HCT116 (cell line): ENCODE measurements at regions of chr19 and their contacts with region 1.

Region 1: DNA sequence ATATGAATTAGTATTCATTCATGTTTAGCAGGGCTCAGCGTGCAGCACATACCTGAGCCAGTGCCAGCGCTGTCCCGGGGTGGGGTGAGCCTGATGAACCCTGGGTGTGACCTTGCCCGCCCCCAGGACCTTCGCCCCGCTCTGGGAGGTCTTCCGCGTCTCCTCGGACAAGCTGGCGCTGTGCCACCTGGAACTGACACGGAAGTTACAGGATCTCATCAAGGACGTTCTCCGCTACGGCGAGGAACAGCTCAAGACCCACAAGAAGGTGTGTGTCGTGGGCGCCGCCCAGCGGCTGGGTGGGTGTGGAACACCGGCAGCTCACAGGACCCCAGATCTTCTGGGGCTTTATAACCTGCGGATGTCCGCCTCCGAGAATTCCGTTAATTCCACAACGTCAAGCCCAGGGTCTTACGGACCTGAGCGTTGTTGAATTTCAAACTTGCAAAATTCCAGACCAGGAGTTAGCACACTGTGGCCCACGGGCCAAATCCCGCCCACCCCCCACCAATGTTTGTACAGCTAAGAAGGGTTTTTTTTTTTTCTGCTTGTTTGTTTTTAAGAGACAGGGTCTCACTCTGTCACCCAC is 15.4 kb downstream of the FCHO1 start:
- DNase-seq: peak; percentile 88
- ATAC-seq: peak; percentile 91
- H3K4me3 ChIP-seq: peak overlapping the region; percentile 42 to 50
- H3K27ac ChIP-seq: peak overlapping the region; percentile 39; the same call in 1 of the 2 replicates
- H3K4me1 ChIP-seq: peaks cover 20 to 32% of the 10 kb centered on the region in 2 experiments
- H3K27me3 ChIP-seq: no peaks in the 10 kb centered on the region
- CTCF ChIP-seq: peak; percentile 81 to 94 (median 93)
- POLR2A ChIP-seq: no peak
- RAD21 ChIP-seq: peak; percentile 98

Region 2: DNA sequence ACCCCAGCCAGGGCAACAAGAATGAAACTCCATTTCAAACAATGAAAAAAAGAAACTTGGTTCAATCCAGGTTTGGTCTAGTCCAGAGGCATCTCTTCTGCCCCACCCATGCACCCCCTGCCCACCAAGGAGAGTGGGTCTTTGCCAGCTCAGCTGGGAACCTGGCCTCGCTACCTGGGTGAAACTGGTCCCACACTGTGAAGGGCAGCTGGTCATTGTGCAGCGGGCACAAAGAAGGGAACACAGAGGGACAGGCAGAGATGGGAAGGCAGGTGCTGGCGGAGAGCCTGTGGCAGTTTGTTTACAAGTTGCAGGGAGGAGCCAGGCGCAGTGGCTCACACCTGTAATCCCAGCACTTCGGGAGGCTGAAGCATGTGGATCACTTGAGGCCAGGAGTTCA is 790.2 kb before region 1 on chr19:
- CTCF ChIA-PET with region 1: no interaction called
- POLR2A ChIA-PET with region 1: no interaction called
- RAD21 ChIA-PET with region 1: no interaction called
- intact Hi-C with region 1: no loop called
- DNase-seq: no peak
- ATAC-seq: no peak
- H3K4me3 ChIP-seq: no peak overlapping the region
- H3K27ac ChIP-seq: no peak overlapping the region
- H3K4me1 ChIP-seq: no peaks in the 10 kb centered on the region
- H3K27me3 ChIP-seq: peaks cover 10% of the 10 kb centered on the region
- CTCF ChIP-seq: no peak
- POLR2A ChIP-seq: no peak
- RAD21 ChIP-seq: no peak

Region 3: GRCh38 chr19:17496337-17496997 is 270.2 kb before region 1 on chr19:
- CTCF ChIA-PET with region 1: interaction called, 6 read pairs
- POLR2A ChIA-PET with region 1: interaction called, 3 read pairs
- RAD21 ChIA-PET with region 1: no interaction called
- intact Hi-C with region 1: loop called (anchors 5 kb)
- DNase-seq: peak; percentile 71
- ATAC-seq: peak; percentile 96
- H3K4me3 ChIP-seq: no peak overlapping the region
- H3K27ac ChIP-seq: no peak overlapping the region; the same call in 1 of the 2 replicates
- H3K4me1 ChIP-seq: peaks cover 11 to 31% of the 10 kb centered on the region in 2 experiments
- H3K27me3 ChIP-seq: no peaks in the 10 kb centered on the region
- CTCF ChIP-seq: peak; percentile 99 to 100 (median 99)
- POLR2A ChIP-seq: no peak
- RAD21 ChIP-seq: peak; percentile 81

Region 4: DNA sequence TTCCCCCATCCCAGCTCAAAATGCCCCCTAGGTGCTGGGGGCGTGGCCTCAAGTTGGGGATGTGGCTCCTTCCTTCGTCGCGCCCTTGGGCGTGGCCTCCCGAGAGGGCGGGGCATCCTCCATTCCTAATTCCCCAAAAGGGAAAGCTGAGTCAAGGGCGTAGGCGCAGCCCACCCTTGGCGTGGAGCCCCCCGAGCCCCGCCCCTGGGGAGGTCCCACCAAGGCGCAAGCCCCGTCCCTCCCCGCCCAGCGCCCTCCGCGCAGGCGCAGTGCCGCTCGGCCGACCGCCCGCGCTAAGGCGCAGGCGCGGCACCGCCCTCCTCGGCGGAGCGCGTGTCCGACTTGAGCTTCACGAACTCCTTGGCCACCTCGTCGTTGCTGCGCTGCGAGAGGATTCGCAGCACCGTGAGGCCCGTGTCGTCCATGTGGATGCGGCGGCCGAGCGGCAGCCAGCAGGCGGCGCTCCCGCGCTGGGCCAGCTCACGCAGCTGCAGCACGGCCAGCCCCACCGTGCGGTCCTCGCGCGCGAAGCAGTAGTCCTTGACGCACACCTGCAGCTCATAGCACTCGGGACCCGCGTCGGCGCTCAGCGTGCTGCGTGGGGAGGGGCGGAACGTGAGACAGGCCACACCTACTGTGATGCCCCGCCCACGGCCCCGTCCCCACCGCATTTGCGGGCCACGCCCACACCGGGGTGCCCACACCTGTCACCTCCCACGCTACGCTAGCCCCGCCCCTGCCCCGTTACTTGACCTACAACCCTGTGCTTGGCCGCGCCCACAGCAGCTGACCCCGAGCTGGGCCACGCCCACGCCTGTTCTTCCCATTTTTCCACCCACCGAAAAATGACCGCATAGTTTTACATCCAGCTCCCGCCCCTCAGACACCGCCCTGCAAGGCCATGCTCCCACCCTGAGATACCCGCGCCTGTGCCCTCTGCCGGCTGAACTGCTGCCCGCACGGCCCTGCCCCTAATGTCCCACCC is 160.6 kb before region 1 on chr19:
- CTCF ChIA-PET with region 1: interaction called, 30 read pairs
- POLR2A ChIA-PET with region 1: interaction called, 3 read pairs
- RAD21 ChIA-PET with region 1: interaction called, 3 to 6 read pairs
- intact Hi-C with region 1: no loop called
- DNase-seq: peak; percentile 92
- ATAC-seq: peak; percentile 94
- H3K4me3 ChIP-seq: peak overlapping the region; percentile 7 to 37; a peak in 2 of 4 replicates
- H3K27ac ChIP-seq: peak overlapping the region; percentile 87
- H3K4me1 ChIP-seq: peaks cover 8 to 19% of the 10 kb centered on the region in 2 experiments
- H3K27me3 ChIP-seq: no peaks in the 10 kb centered on the region
- CTCF ChIP-seq: peak; percentile 68 to 94 (median 88)
- POLR2A ChIP-seq: peak; percentile 86
- RAD21 ChIP-seq: peak; percentile 75

Region 5: GRCh38 chr19:17747205-17748098 is 19.2 kb before region 1 on chr19:
- CTCF ChIA-PET with region 1: interaction called, 11 read pairs
- POLR2A ChIA-PET with region 1: no interaction called
- RAD21 ChIA-PET with region 1: interaction called in 1 of 2 experiments, 3 read pairs
- intact Hi-C with region 1: no loop called
- DNase-seq: peak; percentile 93
- ATAC-seq: peak; percentile 99
- H3K4me3 ChIP-seq: peak overlapping the region; percentile 54 to 61
- H3K27ac ChIP-seq: no peak overlapping the region; the same call in 1 of the 2 replicates
- H3K4me1 ChIP-seq: peaks cover 3 to 20% of the 10 kb centered on the region in 2 experiments; a peak in 3 of 4 replicates
- H3K27me3 ChIP-seq: no peaks in the 10 kb centered on the region
- CTCF ChIP-seq: no peak
- POLR2A ChIP-seq: no peak
- RAD21 ChIP-seq: no peak

Region 6: GRCh38 chr19:17817668-17818363 is 51.2 kb after region 1 on chr19:
- CTCF ChIA-PET with region 1: no interaction called
- POLR2A ChIA-PET with region 1: no interaction called
- RAD21 ChIA-PET with region 1: no interaction called
- intact Hi-C with region 1: no loop called
- DNase-seq: no peak
- ATAC-seq: no peak
- H3K4me3 ChIP-seq: no peak overlapping the region
- H3K27ac ChIP-seq: no peak overlapping the region
- H3K4me1 ChIP-seq: no peaks in the 10 kb centered on the region
- H3K27me3 ChIP-seq: no peaks in the 10 kb centered on the region
- CTCF ChIP-seq: no peak
- POLR2A ChIP-seq: no peak
- RAD21 ChIP-seq: no peak